ENCODE measurements at regions of chr7 and their contacts with region 1.

Region 1: GRCh38 chr7:150668472-150668911 is 17.0 kb upstream of the GIMAP2 start:
- DNase-seq: peak; percentile 88
- ATAC-seq: peak; percentile 76
- H3K4me3 Mint-ChIP-seq: peak overlapping the region; percentile 36
- H3K27ac Mint-ChIP-seq: peak overlapping the region; percentile 93
- H3K4me1 Mint-ChIP-seq: peaks cover 88% of the 10 kb centered on the region
- H3K27me3 Mint-ChIP-seq: no peaks in the 10 kb centered on the region

Region 2: DNA sequence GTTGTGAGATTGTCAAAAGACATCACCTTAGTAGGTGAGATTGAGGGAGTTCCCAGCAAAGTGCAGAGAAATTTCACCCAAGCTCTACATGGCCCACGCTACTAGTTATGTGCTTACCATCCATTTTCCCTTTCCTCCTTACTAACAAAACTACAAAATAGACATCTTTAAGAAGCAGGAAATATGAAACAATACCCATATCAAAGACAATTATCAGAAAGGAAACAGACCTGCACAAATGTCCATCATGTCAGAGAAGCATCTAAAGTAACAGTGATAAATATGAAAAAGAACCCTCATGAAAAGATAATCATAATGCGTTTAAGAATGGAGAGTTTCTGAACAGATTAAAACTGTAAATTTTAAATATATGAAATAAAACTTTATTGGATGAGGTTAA is 73.1 kb before region 1 on chr7:
- CTCF ChIA-PET with region 1: no interaction called
- DNase-seq: no peak
- ATAC-seq: no peak
- H3K4me3 Mint-ChIP-seq: no peak overlapping the region
- H3K27ac Mint-ChIP-seq: no peak overlapping the region
- H3K4me1 Mint-ChIP-seq: peaks cover 4% of the 10 kb centered on the region
- H3K27me3 Mint-ChIP-seq: no peaks in the 10 kb centered on the region

Region 3: DNA sequence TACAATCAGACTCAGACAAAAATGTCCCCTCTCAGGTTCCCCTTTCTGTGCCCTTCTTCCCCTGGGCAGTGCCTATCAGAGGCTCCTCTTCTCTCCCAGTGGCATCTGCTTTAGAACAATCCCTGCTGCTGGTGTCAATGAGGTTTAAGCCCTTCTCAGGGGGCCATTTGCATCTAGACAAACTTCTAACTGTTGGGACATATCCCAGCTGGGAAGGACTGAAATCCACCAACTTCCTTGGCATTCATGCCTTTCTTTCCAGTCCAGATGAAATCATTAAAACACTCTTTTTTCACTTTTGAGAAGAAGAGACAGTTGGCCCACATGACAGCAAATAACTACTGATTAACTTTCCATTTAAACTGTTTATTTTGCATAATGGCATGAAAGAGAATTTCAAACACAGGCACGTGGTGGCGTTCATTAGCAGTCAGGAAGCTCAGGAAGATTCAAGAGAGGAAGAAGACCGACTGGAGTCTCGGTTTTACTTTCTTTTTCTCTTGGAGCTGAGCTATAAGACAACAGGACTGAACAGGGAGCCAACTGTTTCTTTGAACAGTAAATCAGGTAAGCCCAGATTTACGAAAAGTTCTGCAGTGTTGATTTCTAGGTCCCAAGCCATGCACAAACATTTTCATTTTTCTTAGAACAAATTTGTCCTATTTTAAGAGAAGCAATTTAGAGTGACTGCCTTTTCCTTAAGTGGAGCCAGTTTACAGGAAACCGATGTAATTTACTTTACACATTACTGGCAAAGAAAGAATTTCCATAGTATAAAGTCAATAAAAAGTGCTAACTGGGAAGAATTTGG is 16.9 kb after region 1 on chr7 and contains the start of gene GIMAP2:
- CTCF ChIA-PET with region 1: interaction called, 21 read pairs
- DNase-seq: peak; percentile 51
- ATAC-seq: peak; percentile 88
- H3K4me3 Mint-ChIP-seq: peak within 1 kb of the TSS; percentile 98
- H3K27ac Mint-ChIP-seq: peak within 1 kb of the TSS; percentile 97
- H3K4me1 Mint-ChIP-seq: peaks cover 76% of the 10 kb centered on the region
- H3K27me3 Mint-ChIP-seq: no peaks in the 10 kb centered on the region
- total RNA-seq, gene GIMAP2: 60.3 to 80.0 TPM

Region 4: GRCh38 chr7:151003572-151003971 is 335.1 kb after region 1 on chr7:
- CTCF ChIA-PET with region 1: no interaction called
- DNase-seq: no peak
- ATAC-seq: no peak
- H3K4me3 Mint-ChIP-seq: no peak overlapping the region
- H3K27ac Mint-ChIP-seq: no peak overlapping the region
- H3K4me1 Mint-ChIP-seq: peaks cover 16% of the 10 kb centered on the region
- H3K27me3 Mint-ChIP-seq: no peaks in the 10 kb centered on the region